Ascending aorta (tissue), 2 donors: ENCODE measurements at regions of chr6 and their contacts with region 1.

Region 1: GRCh38 chr6:41591859-41592502 is 45.8 kb downstream of the FOXP4 start:
- DNase-seq: peak in 1 of 2 donors; percentile 85
- H3K4me3 ChIP-seq: no peak overlapping the region
- H3K27ac ChIP-seq: no peak overlapping the region
- H3K4me1 ChIP-seq: no peaks in the 10 kb centered on the region
- H3K27me3 ChIP-seq: no peaks in the 10 kb centered on the region
- CTCF ChIP-seq: peak; percentile 84 to 89 (median 89)

Region 2: DNA sequence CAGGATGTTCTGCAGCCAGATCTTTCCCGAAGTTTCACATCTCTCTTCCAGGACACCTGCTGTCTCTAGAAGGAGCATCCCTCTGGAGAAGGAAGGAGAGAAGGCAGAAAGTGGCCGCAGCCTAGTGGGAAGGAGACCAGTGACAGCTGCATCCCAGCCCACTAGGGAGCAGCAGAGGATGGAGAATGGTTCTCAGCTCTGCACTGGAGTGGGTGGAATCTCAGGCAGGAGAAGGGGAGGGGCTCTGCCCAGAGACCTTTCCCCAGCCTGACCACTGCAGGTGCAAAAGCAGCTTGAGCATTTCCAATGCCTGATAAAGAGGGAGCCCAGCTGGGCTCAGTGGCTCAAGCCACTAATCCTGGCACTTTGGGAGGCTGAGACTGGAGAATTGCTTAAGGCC is 224.3 kb before region 1 on chr6:
- intact Hi-C with region 1: loop called (anchors 1 kb)
- DNase-seq: no peak
- H3K4me3 ChIP-seq: no peak overlapping the region
- H3K27ac ChIP-seq: no peak overlapping the region
- H3K4me1 ChIP-seq: peaks cover 3 to 5% of the 10 kb centered on the region in 2 donors
- H3K27me3 ChIP-seq: peaks cover 5% of the 10 kb centered on the region
- CTCF ChIP-seq: peak in 2 of 3 experiments; percentile 18 to 34

Region 3: DNA sequence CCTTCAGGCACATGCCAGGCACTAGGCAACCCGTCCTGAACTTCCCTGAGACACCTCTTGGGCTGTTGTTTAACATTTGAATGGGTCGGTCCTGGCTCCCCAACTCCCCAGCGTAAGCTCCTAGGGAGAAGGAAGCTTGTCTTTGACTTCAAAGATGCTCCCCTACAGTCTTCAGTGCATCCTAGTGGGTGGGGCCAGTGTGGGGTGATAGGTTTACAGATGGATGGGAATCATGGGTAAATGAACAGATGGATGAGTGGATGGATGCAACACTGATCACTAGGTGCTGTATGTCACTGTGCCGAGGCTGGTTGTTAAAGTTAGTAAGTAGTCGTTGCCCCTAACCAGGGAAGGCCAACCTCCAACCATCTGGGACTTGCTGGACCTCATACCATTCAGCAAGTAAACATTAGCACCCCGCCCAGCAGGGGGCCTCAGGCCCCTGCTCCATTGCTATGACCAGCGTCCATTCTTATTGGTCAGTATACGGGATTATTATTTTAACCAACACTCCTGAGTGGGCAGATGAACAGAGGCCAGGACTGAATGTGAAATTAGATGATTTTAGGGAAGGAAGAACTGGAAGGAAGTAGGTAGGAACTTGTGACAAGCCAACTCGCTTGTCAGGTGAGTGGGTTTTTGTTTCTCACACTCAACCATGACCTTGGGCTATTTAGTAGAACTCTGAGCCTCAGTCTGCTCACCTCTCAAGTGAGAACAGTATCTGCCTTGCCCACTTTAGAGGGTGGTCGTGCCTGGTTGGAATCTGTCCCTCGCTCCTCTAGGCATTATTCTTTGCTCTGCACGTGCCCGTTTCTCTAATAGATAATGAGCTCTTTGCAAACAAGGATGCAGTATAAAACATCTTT is 128.7 kb before region 1 on chr6:
- intact Hi-C with region 1: loop called (anchors 1 kb)
- DNase-seq: peak; percentile 14 to 81
- H3K4me3 ChIP-seq: no peak overlapping the region
- H3K27ac ChIP-seq: no peak overlapping the region
- H3K4me1 ChIP-seq: no peaks in the 10 kb centered on the region
- H3K27me3 ChIP-seq: no peaks in the 10 kb centered on the region
- CTCF ChIP-seq: peak; percentile 53 to 73 (median 59)

Region 4: DNA sequence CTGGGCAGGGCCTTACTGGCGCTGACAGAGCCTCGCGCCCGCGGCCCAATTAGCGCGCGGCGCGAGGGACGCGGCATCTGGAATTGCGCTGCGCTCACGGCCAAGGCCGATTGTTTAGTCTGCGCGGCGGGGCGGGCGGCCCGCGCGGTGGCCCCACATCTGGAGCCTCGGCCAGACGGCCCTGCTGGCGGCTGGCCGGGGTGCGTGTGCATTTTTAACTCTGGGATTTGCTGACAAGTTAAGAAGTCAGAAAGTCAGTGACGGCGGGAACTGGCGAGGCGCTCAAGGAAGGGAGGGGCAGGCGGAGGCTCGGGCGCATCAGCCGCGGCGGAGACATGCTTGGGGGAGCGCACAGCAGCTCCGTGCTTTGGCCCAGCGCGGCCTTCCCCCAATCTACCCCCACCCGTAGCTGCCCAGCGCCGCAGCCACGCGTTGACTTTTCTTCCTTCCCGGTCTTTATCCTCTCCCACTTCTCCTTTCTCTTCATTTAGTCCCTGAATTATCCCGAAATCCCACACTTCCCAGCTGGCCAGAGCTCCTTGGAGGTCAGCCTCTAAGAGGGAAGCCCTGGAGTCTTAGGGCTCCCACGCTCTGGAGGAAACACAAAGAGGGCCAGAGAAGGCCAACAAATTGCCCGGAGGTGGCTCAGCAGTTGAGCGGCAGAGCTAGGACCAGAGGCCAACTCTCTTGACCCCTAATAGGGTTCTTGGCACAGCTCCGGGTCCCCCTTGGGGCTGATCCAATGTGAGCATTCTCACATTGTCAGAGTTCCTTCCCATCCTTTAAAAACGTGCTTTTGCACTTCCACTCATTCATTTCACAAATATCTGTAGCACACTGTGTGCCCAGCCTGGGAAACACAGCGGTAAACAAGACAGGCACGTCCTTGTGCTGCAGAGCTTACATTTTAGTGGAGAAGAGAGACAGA is 86.6 kb before region 1 on chr6:
- intact Hi-C with region 1: loop called (anchors 5 kb)
- DNase-seq: peak in 1 of 2 donors; percentile 90
- H3K4me3 ChIP-seq: peak overlapping the region; percentile 53 to 63
- H3K27ac ChIP-seq: peak overlapping the region; percentile 85 to 90
- H3K4me1 ChIP-seq: peaks cover 4 to 12% of the 10 kb centered on the region in 2 donors
- H3K27me3 ChIP-seq: no peaks in the 10 kb centered on the region
- CTCF ChIP-seq: no peak

Region 5: DNA sequence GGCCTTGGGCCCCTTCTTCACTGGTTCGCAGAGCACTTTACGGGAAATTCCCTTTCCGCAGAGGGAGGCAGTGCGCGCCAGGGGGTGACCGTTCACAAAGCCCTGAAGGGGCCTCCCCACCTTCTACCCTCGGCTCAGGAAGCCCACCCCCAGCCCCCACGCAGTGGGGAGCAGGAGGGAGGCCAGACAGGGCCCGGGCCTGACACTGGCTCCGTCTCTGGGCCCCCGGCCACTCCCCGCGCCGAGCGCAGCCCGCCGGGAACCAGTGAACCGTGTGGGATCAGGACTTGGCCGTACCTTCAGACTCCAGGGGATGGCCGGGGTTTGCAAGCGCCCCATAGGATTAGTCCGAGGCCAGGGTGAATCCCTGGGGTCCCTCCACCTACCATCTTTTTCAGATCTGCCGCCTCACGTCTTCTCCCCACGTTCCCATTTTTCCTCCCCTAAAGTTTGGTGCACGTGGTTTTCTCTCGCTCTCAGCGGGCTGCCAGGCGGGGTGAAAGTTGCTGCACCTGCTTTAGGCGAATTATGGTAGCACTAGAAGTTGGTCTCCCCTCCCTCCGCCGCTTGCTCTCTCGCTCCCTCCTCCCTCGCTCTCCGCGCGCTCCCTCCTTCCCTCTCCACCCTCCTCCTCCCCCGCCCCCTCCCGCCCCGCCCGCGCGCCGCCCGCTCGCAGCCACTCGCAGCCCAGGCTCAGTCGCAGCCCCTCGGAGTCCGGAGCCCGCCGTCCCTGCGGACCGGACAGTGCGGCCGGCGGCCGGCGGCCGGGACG is 46.1 kb before region 1 on chr6 and contains the start of gene FOXP4:
- intact Hi-C with region 1: loop called (anchors 2 kb)
- DNase-seq: peak; percentile 49 to 93
- H3K4me3 ChIP-seq: peak within 1 kb of the TSS; percentile 75 to 95
- H3K27ac ChIP-seq: peak within 1 kb of the TSS; percentile 50 to 92
- H3K4me1 ChIP-seq: peaks cover 11 to 16% of the 10 kb centered on the region in 2 donors
- H3K27me3 ChIP-seq: no peaks in the 10 kb centered on the region
- CTCF ChIP-seq: no peak
- total RNA-seq, gene FOXP4: 19.5 TPM